CD8-positive, alpha-beta T cell (primary cell): ENCODE measurements at regions of chr4 and their contacts with region 1.

Region 1: DNA sequence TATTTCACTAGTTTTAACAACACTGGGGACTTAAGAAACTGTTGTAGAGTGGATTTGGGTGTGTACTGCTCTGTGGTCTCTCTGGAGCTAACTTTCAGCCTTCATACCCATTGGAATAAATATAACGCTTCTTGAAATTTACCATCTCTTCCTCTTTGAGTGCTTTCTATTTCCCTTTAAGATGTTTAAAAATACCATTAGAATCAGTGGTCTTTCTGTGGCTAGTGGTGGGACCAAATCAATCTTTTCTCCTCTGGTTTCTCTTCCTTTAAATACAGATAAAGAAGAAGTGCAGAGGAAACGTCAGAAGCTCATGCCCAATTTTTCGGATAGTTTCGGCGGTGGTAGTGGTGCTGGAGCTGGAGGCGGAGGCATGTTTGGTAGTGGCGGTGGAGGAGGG is 92.0 kb downstream of the NFKB1 start:
- DNase-seq: no peak
- ATAC-seq: no peak
- H3K4me3 ChIP-seq: no peak overlapping the region
- H3K4me3 Mint-ChIP-seq: no peak overlapping the region
- H3K27ac ChIP-seq: no peak overlapping the region
- H3K27ac Mint-ChIP-seq: peak overlapping the region; percentile 5
- H3K4me1 ChIP-seq: peaks cover 71% of the 10 kb centered on the region
- H3K4me1 Mint-ChIP-seq: peaks cover 83% of the 10 kb centered on the region
- H3K27me3 ChIP-seq: no peaks in the 10 kb centered on the region
- H3K27me3 Mint-ChIP-seq: no peaks in the 10 kb centered on the region
- CTCF ChIP-seq: no peak

Region 2: GRCh38 chr4:102399021-102399420 is 194.1 kb before region 1 on chr4:
- CTCF ChIA-PET with region 1: no interaction called
- POLR2A ChIA-PET with region 1: no interaction called
- intact Hi-C with region 1: no loop called
- DNase-seq: no peak
- ATAC-seq: no peak
- H3K4me3 ChIP-seq: no peak overlapping the region
- H3K4me3 Mint-ChIP-seq: no peak overlapping the region
- H3K27ac ChIP-seq: no peak overlapping the region
- H3K27ac Mint-ChIP-seq: no peak overlapping the region
- H3K4me1 ChIP-seq: no peaks in the 10 kb centered on the region
- H3K4me1 Mint-ChIP-seq: no peaks in the 10 kb centered on the region
- H3K27me3 ChIP-seq: no peaks in the 10 kb centered on the region
- H3K27me3 Mint-ChIP-seq: no peaks in the 10 kb centered on the region
- CTCF ChIP-seq: no peak

Region 3: GRCh38 chr4:102578819-102579218 is 14.3 kb before region 1 on chr4:
- CTCF ChIA-PET with region 1: interaction called, 3 read pairs
- POLR2A ChIA-PET with region 1: no interaction called
- intact Hi-C with region 1: loop called in 1 of 2 experiments (anchors 2 kb)
- DNase-seq: peak in 2 of 9 experiments; percentile 44 to 53
- ATAC-seq: peak; percentile 22
- H3K4me3 ChIP-seq: no peak overlapping the region
- H3K4me3 Mint-ChIP-seq: no peak overlapping the region
- H3K27ac ChIP-seq: no peak overlapping the region
- H3K27ac Mint-ChIP-seq: no peak overlapping the region
- H3K4me1 ChIP-seq: peaks cover 40% of the 10 kb centered on the region
- H3K4me1 Mint-ChIP-seq: peaks cover 67% of the 10 kb centered on the region
- H3K27me3 ChIP-seq: no peaks in the 10 kb centered on the region
- H3K27me3 Mint-ChIP-seq: no peaks in the 10 kb centered on the region
- CTCF ChIP-seq: no peak